Activated CD4-positive, alpha-beta T cell treated with anti-CD3 and anti-CD28 coated beads, Interleukin-2, amount 10 ng/mL, durations not matched to agents 7 days and 5 days (primary cell): ENCODE measurements at regions of chr17 and their contacts with region 1.

Region 1: DNA sequence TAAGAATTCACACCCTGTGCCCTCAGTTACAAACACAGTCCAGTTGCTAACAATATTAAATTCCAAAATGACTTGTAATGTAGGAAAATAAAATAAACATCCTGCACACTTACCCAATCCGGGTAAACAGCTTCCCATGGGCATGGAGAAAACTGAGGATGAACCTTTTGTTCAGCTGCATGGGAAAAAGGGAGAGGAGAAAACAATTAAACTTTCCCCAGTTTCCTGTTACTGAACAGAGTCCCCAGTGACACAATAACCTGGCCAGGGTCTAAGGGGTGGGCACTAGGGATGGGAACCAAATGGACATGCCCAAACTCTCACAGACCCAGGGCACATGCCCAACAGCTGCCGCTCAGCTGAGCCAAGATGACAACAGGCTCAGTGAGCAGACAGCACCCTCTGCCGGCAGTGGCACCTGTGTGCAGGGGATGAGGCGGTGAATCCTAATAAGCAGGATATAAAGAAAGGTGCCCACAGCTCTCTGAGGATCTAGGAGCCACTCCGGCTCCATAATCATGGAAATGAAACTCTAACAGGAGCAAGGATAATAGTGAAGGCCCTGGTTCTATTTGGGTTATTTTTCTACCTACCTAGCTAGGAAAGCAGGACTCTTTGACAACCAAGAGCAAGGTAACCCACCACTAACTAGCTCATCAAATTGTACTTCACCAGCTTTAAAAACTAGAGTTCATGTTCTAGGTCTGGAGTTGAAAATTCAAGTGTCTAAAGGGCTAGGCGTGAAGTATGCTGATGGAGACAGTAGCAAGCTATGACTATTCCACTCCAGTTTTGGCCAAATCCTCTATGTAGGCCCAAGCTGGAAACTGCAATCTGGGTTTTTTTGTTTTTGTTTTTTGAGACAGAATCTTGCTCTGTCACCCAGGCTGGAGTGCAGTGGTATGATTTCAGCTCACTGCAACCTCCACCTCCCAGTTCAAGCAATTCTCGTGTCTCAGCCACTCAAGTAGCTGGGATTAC is 58.8 kb downstream of the SMG6 start:
- DNase-seq: peak; percentile 90
- H3K4me3 Mint-ChIP-seq: no peak overlapping the region
- H3K27ac Mint-ChIP-seq: peak overlapping the region; percentile 78
- H3K4me1 Mint-ChIP-seq: peaks cover 81% of the 10 kb centered on the region
- H3K27me3 Mint-ChIP-seq: no peaks in the 10 kb centered on the region

Region 2: DNA sequence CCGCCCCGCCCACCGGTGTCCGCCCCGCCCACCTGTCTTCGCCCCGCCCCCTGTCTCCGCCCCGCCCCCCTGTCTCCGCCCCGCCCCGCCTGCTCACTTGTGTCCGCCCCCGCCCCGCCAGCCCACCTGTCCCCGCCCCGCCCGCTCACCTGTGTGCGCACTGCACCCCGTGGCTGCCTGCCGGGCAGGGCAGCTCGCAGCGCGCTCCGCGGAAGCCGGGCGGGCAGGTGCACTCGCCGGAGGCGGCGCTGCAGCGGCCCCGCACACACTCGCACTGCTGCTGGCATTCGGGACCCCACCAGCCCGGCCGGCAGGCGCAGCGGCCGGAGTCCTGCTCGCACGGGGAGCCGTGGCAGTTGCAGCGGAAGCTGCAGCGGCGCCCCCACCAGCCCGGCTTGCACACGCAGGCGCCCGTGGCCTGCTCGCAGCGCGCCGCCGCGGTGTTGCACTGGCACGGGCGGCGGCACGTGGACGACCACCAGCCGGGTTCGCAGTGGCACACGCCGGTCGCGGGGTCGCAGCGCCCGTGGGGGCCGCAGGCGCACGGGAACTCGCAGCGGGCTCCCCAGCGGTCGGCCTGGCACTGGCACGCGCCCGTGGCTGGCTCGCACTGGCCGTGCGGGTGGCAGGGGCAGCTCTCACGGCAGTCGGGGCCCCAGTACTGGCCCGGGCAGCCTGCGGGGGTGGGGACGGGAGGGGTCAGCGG is 601.4 kb before region 1 on chr17:
- CTCF ChIA-PET with region 1: no interaction called
- POLR2A ChIA-PET with region 1: no interaction called
- DNase-seq: peak; percentile 60
- H3K4me3 Mint-ChIP-seq: no peak overlapping the region
- H3K27ac Mint-ChIP-seq: no peak overlapping the region
- H3K4me1 Mint-ChIP-seq: peaks cover 29% of the 10 kb centered on the region
- H3K27me3 Mint-ChIP-seq: no peaks in the 10 kb centered on the region

Region 3: GRCh38 chr17:2029911-2030778 is 214.7 kb before region 1 on chr17 and contains the start of gene DPH1:
- CTCF ChIA-PET with region 1: no interaction called
- POLR2A ChIA-PET with region 1: no interaction called
- DNase-seq: peak; percentile 90
- H3K4me3 Mint-ChIP-seq: peak within 1 kb of the TSS; percentile 95
- H3K27ac Mint-ChIP-seq: peak within 1 kb of the TSS; percentile 88
- H3K4me1 Mint-ChIP-seq: peaks cover 26% of the 10 kb centered on the region
- H3K27me3 Mint-ChIP-seq: peaks cover 37% of the 10 kb centered on the region
- total RNA-seq, gene DPH1: 31.3 to 37.8 TPM

Region 4: GRCh38 chr17:2064980-2065785 is 179.7 kb before region 1 on chr17:
- CTCF ChIA-PET with region 1: interaction called, 210 read pairs
- POLR2A ChIA-PET with region 1: no interaction called
- DNase-seq: peak; percentile 72
- H3K4me3 Mint-ChIP-seq: no peak overlapping the region
- H3K27ac Mint-ChIP-seq: peak overlapping the region; percentile 9
- H3K4me1 Mint-ChIP-seq: peaks cover 56% of the 10 kb centered on the region
- H3K27me3 Mint-ChIP-seq: no peaks in the 10 kb centered on the region

Region 5: GRCh38 chr17:2075336-2076086 is 169.3 kb before region 1 on chr17:
- CTCF ChIA-PET with region 1: interaction called, 54 read pairs
- POLR2A ChIA-PET with region 1: no interaction called
- DNase-seq: no peak
- H3K4me3 Mint-ChIP-seq: no peak overlapping the region
- H3K27ac Mint-ChIP-seq: no peak overlapping the region
- H3K4me1 Mint-ChIP-seq: peaks cover 28% of the 10 kb centered on the region
- H3K27me3 Mint-ChIP-seq: no peaks in the 10 kb centered on the region

Region 6: DNA sequence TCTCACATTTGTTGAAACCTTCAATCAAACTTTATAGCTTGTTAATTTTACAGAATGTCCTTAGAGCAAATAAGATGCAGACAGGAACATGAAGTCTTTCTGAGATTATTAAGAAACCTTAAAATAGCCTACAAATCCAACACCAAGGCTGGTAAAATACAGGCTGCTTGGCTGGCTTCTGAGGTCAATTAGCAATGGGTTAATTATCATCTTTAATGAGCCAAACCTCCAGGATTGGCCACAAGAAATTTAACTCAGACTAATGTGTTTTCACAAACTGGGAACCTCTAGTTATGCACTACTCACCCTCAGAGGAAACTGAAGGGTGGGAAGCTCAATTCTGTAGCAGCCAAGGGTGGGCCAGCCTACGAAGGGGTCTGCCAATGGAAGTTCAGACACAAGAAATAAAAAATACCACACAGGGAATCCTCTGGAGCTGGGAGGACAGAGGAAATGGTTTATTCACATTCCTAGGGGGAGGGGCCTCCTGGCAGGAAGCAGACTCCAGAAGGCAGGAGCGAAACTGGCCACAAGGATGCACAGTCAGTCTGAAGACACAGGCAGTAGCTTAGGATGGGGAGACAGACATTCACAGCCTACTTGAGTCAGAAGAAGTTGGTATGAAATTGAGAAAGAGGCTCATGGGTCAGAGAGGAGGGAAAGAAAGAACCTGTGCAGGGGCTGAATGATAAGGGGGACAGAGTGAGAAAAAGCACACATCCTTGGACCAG is 153.9 kb before region 1 on chr17:
- CTCF ChIA-PET with region 1: interaction called, 14 read pairs
- POLR2A ChIA-PET with region 1: interaction called, 3 read pairs
- DNase-seq: no peak
- H3K4me3 Mint-ChIP-seq: peak overlapping the region; percentile 84
- H3K27ac Mint-ChIP-seq: peak overlapping the region; percentile 94
- H3K4me1 Mint-ChIP-seq: peaks cover 72% of the 10 kb centered on the region
- H3K27me3 Mint-ChIP-seq: no peaks in the 10 kb centered on the region

Region 7: DNA sequence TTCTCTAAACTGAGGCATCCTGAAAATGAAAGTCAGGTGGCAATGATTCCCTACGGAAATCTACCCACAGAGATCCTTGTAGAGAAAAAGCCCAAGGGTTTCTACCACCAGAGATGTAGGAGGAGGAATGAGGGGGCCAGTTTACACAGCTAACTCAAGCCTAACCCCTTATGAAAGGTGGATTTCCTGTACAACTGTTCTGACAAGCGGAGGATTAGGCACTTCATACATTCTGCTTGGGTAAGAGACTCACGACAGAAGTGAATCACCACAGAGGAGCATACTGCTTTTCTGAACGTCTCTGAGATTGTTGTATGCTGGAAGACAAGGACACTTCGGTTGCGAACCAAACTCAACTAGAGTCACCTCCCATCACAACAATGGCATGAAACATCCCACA is 14.0 kb before region 1 on chr17:
- CTCF ChIA-PET with region 1: interaction called, 11 read pairs
- POLR2A ChIA-PET with region 1: no interaction called
- DNase-seq: no peak
- H3K4me3 Mint-ChIP-seq: no peak overlapping the region
- H3K27ac Mint-ChIP-seq: no peak overlapping the region
- H3K4me1 Mint-ChIP-seq: peaks cover 43% of the 10 kb centered on the region
- H3K27me3 Mint-ChIP-seq: no peaks in the 10 kb centered on the region

Region 8: DNA sequence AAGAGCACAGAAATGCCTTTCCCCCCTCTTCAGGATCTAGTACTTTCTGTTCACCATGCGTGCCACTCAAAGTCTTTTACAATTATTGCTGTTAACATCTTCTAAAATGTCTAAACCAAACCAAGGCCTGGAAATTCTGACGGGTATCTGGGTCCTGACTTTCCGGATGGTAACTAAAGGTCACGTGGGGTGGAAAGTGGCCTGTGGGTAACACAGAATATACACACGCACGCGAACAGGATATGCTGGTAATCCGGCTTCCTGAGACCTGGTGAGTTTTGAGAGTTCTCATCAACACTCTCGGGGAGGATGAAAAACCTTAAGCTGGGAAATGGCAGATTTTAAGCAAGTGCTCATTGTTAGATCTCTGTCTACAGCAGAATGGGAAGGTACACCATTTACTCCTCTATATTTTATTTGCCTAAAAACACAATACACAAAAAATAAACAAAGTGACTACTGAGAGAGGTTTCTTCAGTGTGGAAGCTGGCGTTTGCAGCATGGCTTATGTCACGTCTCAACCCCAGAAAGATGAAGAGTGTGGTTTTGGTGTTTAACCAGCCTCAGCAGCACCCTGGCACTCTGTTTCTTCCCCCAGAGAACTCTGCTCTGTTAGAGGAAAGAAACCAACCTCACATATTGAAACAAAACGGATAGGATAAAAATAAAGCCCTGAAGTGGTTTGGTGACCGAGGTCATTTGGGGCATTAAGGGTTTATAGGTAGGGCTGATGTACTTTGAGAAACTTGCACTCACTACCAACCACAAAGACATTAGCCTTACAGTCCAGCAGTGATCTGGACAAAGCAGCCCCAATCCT is 21.4 kb after region 1 on chr17:
- CTCF ChIA-PET with region 1: interaction called, 19 read pairs
- POLR2A ChIA-PET with region 1: no interaction called
- DNase-seq: peak; percentile 95
- H3K4me3 Mint-ChIP-seq: peak overlapping the region; percentile 74
- H3K27ac Mint-ChIP-seq: peak overlapping the region; percentile 96
- H3K4me1 Mint-ChIP-seq: peaks cover 84% of the 10 kb centered on the region
- H3K27me3 Mint-ChIP-seq: no peaks in the 10 kb centered on the region

Region 9: DNA sequence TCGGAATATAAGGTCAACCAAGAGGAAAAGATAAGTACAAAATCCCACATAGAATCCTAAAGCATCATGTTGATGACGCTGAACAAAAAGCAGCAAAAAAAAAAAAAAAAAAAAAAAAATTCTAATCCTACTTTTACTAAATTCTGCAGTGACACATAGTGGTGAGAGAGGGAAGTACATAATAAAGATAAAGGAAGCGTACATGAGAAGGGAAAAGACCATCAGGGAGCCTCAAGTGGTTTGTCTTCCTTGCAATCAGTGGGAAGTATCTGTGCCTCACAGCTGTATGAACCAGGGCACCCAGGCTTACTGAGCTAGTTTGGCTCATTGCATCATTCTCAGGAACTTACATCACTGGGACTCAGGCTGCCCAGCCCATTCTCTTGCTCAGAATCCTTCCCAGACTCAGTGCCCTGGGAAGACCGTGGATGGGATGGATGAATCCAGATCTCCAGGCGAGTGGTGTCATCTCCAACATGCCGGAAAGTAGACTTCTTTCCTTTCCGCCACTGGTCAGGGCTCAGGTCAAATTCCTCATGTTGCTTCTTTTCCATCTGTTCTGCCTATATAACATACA is 37.5 kb after region 1 on chr17:
- CTCF ChIA-PET with region 1: interaction called, 25 read pairs
- POLR2A ChIA-PET with region 1: interaction called, 3 read pairs
- DNase-seq: no peak
- H3K4me3 Mint-ChIP-seq: no peak overlapping the region
- H3K27ac Mint-ChIP-seq: peak overlapping the region; percentile 11
- H3K4me1 Mint-ChIP-seq: peaks cover 53% of the 10 kb centered on the region
- H3K27me3 Mint-ChIP-seq: no peaks in the 10 kb centered on the region